ENCODE measurements at regions of chr6 and their contacts with region 1.

Region 1: GRCh38 chr6:32680055-32680454 is 13.6 kb upstream of the HLA-DQB1 start:
- DNase-seq: no peak
- ATAC-seq: no peak
- H3K4me3 ChIP-seq: no peak overlapping the region
- H3K4me3 Mint-ChIP-seq: no peak overlapping the region
- H3K27ac ChIP-seq: no peak overlapping the region
- H3K27ac Mint-ChIP-seq: no peak overlapping the region
- H3K4me1 ChIP-seq: no peaks in the 10 kb centered on the region
- H3K4me1 Mint-ChIP-seq: peaks cover 12% of the 10 kb centered on the region
- H3K27me3 ChIP-seq: no peaks in the 10 kb centered on the region
- H3K27me3 Mint-ChIP-seq: no peaks in the 10 kb centered on the region
- CTCF ChIP-seq: no peak

Region 2: DNA sequence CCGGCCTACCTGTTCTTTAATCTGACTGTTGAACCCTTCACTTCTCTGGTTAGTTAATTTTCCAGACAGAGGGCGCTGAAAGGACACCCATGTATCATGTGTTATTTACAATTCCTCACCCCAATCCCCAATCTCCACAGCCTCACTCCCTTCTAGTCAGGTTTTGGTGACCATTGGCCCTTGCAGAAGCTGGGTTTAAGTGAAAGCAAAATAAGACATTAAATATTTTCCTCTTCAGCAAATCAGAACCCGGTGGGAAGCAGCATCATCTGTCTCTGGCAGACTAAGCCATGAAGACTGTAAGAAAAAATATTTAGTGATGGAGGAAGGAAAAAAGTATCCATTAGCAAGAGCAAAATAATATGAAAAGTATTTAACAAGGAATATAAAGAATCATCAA is 52.2 kb before region 1 on chr6:
- CTCF ChIA-PET with region 1: no interaction called
- POLR2A ChIA-PET with region 1: interaction called, 5 read pairs
- intact Hi-C with region 1: loop called (anchors 2 to 5 kb)
- DNase-seq: peak in 7 of 14 experiments; percentile 11 to 71 (median 28)
- ATAC-seq: peak; percentile 37
- H3K4me3 ChIP-seq: no peak overlapping the region
- H3K4me3 Mint-ChIP-seq: peak overlapping the region; percentile 30
- H3K27ac ChIP-seq: no peak overlapping the region
- H3K27ac Mint-ChIP-seq: peak overlapping the region; percentile 38
- H3K4me1 ChIP-seq: peaks cover 12% of the 10 kb centered on the region
- H3K4me1 Mint-ChIP-seq: peaks cover 50% of the 10 kb centered on the region
- H3K27me3 ChIP-seq: no peaks in the 10 kb centered on the region
- H3K27me3 Mint-ChIP-seq: no peaks in the 10 kb centered on the region
- CTCF ChIP-seq: no peak

Region 3: DNA sequence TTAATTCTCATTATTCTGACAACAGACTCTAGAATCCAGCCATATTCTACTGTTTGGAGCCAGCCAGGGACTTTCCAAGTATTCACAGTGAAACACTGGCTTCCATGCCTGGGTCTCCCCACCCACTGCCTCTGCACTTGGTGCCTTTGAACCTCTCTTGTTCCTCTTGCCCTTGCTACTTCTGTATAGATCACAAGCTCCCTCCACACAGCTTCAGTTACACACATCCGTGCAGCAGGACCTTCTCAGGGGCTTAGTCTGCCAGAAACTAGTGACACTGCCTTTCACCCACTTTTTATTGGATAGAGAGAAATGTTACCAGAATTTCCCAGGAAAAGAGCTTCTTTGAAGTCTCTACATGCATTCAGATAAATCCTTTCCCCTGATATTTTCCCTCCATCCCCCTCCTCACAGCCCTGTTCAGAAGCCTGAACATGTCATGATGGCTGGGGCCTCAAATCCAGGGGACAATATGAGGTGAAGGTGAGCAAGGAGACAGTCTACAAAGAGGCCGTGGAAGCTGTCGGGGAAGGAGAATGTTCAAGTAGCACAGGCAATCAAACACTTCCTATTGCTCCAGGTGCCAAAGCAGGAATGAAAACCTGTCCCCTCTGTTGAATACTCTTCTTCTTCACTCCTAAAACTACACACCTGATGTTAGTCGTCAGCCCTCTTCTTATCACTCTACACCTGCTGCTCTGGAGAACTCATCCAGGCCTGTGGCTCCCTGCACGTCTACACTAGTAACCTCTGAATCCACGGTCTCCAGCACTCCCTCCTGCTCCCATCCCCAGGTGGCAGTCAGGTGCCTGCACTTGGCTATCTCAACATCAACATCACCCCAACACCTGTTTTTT is 349.5 kb after region 1 on chr6:
- CTCF ChIA-PET with region 1: no interaction called
- POLR2A ChIA-PET with region 1: no interaction called
- intact Hi-C with region 1: no loop called
- DNase-seq: peak in 3 of 14 experiments; percentile 53 to 75 (median 66)
- ATAC-seq: peak; percentile 72
- H3K4me3 ChIP-seq: no peak overlapping the region
- H3K4me3 Mint-ChIP-seq: no peak overlapping the region
- H3K27ac ChIP-seq: peak overlapping the region in 1 of 2 donors; percentile 70
- H3K27ac Mint-ChIP-seq: no peak overlapping the region
- H3K4me1 ChIP-seq: peaks cover 8% of the 10 kb centered on the region
- H3K4me1 Mint-ChIP-seq: no peaks in the 10 kb centered on the region
- H3K27me3 ChIP-seq: no peaks in the 10 kb centered on the region
- H3K27me3 Mint-ChIP-seq: peaks cover 3% of the 10 kb centered on the region
- CTCF ChIP-seq: no peak

Measured in CD4-positive, alpha-beta T cell (primary cell).